ENCODE measurements at regions of chr10 and their contacts with region 1.

Region 1: DNA sequence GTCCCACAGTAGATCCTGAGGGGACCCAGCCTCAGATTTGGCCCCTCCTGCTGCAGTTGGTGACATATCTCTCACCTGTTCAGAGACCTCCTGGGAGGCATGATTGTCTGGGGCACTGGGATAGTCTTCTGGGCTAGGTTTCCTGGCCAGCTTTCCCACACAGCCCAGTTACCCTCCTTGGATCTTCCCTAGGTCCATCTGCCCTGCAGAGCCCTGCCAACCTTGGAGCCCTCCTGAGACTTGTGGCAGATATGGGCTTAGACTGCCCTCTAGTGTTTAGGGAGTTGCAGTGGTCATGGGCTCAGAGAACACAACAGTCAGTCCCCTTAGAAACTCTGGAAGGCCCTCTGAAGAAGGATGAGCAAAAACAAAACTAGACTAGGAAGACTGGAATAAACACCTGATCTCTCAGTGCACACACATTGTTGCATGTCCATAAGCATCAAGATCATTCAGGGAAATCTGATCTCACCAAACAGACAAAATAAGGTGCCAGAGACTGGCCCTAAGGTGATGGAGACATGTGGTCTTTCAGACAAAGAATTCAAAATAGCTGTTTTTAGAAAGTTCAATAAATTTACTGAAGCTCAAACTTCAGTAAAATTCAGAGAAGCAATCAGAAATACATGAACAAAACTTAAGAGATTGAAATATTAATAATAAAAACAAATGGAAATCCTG is 324.6 kb downstream of the ATRNL1 start:
- DNase-seq: peak; percentile 27
- ATAC-seq: peak; percentile 98
- H3K4me3 ChIP-seq: no peak overlapping the region
- H3K27ac ChIP-seq: no peak overlapping the region
- H3K4me1 ChIP-seq: no peaks in the 10 kb centered on the region
- H3K27me3 ChIP-seq: no peaks in the 10 kb centered on the region
- CTCF ChIP-seq: peak; percentile 78

Region 2: DNA sequence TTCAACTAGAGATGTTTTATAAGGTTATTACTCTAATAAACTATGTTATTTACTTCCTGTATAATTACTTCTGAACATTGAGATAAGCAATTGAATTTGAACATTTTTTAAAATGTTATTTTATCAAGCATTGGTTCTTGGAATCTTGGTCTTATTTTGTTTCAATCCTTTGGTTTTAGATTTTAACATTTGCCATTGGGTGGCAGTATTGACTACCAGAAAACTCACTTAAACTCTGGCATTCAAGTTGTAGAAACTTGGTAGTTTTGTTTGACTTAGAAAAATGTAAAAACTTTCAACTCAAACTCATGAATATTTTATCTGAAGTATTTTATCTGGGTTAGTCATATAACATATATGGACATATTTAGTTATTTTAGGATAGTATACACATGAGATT is 276.5 kb before region 1 on chr10:
- CTCF ChIA-PET with region 1: no interaction called
- POLR2A ChIA-PET with region 1: no interaction called
- in situ Hi-C with region 1: no loop called
- intact Hi-C with region 1: loop called (anchors 2 kb)
- DNase-seq: no peak
- ATAC-seq: no peak
- H3K4me3 ChIP-seq: no peak overlapping the region
- H3K27ac ChIP-seq: no peak overlapping the region
- H3K4me1 ChIP-seq: no peaks in the 10 kb centered on the region
- H3K27me3 ChIP-seq: no peaks in the 10 kb centered on the region
- CTCF ChIP-seq: peak; percentile 60; the same call in 1 of the 2 replicates

Region 3: GRCh38 chr10:115171392-115171960 is 246.2 kb before region 1 on chr10:
- CTCF ChIA-PET with region 1: no interaction called
- POLR2A ChIA-PET with region 1: no interaction called
- in situ Hi-C with region 1: no loop called
- intact Hi-C with region 1: loop called (anchors 5 kb)
- DNase-seq: no peak
- ATAC-seq: no peak; the same call in 1 of the 2 replicates
- H3K4me3 ChIP-seq: no peak overlapping the region
- H3K27ac ChIP-seq: no peak overlapping the region
- H3K4me1 ChIP-seq: no peaks in the 10 kb centered on the region
- H3K27me3 ChIP-seq: no peaks in the 10 kb centered on the region
- CTCF ChIP-seq: peak; percentile 48; the same call in 1 of the 2 replicates

Region 4: GRCh38 chr10:115355162-115355760 is 62.5 kb before region 1 on chr10:
- CTCF ChIA-PET with region 1: no interaction called
- POLR2A ChIA-PET with region 1: no interaction called
- in situ Hi-C with region 1: no loop called
- intact Hi-C with region 1: loop called (anchors 1 kb)
- DNase-seq: peak; percentile 47
- ATAC-seq: peak; percentile 94
- H3K4me3 ChIP-seq: no peak overlapping the region
- H3K27ac ChIP-seq: no peak overlapping the region
- H3K4me1 ChIP-seq: no peaks in the 10 kb centered on the region
- H3K27me3 ChIP-seq: no peaks in the 10 kb centered on the region
- CTCF ChIP-seq: peak; percentile 86

Region 5: GRCh38 chr10:115866691-115867090 is 449.0 kb after region 1 on chr10:
- CTCF ChIA-PET with region 1: interaction called, 11 read pairs
- POLR2A ChIA-PET with region 1: no interaction called
- in situ Hi-C with region 1: no loop called
- intact Hi-C with region 1: no loop called
- DNase-seq: no peak
- ATAC-seq: no peak
- H3K4me3 ChIP-seq: no peak overlapping the region
- H3K27ac ChIP-seq: no peak overlapping the region
- H3K4me1 ChIP-seq: no peaks in the 10 kb centered on the region
- H3K27me3 ChIP-seq: no peaks in the 10 kb centered on the region
- CTCF ChIP-seq: no peak

Measured in Panc1 (cell line).